ENCODE measurements at regions of chr17 and their contacts with region 1.

Region 1: GRCh38 chr17:63984651-63985386 is 12.1 kb upstream of the SCN4A start:
- DNase-seq: peak; percentile 88 to 96 (median 94)
- H3K4me3 ChIP-seq: peak overlapping the region in 1 of 7 experiments; percentile 30
- H3K27ac ChIP-seq: peak overlapping the region in 1 of 2 experiments; percentile 71
- H3K4me1 ChIP-seq: peaks cover 7 to 71% (median 54%) of the 10 kb centered on the region in 4 experiments
- H3K27me3 ChIP-seq: no peaks in the 10 kb centered on the region

Region 2: GRCh38 chr17:63911657-63912426 is 73.0 kb before region 1 on chr17:
- CTCF ChIA-PET with region 1: interaction called, 56 read pairs
- POLR2A ChIA-PET with region 1: no interaction called
- DNase-seq: peak in 2 of 3 donors; percentile 48 to 61
- H3K4me3 ChIP-seq: no peak overlapping the region
- H3K27ac ChIP-seq: no peak overlapping the region
- H3K4me1 ChIP-seq: no peaks in the 10 kb centered on the region
- H3K27me3 ChIP-seq: no peaks in the 10 kb centered on the region

Region 3: DNA sequence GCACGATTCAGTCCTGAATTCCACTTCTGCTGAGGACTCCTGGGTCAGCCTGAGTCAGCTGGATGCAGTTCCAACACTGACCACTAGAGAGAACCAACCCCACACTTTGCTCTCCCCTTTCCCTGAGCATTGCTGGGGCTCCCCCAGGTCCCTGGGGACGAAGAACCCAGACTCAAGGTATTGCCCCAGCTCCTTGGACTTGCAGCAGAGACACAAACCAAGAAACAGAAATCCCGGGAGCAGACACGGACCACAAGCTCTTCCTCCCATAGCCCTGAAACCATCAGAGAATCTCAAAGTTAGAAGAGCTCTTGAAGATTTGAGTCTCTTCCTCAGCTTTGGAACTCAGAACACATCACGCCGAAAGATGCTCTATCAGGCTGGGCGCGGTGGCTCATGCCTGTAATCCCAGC is 65.5 kb before region 1 on chr17:
- CTCF ChIA-PET with region 1: interaction called, 56 read pairs
- POLR2A ChIA-PET with region 1: no interaction called
- DNase-seq: peak; percentile 66 to 83 (median 71)
- H3K4me3 ChIP-seq: no peak overlapping the region
- H3K27ac ChIP-seq: no peak overlapping the region
- H3K4me1 ChIP-seq: peaks cover 0 to 5% (median 0%) of the 10 kb centered on the region in 4 experiments
- H3K27me3 ChIP-seq: no peaks in the 10 kb centered on the region

Region 4: GRCh38 chr17:63931099-63931561 is 53.7 kb before region 1 on chr17:
- CTCF ChIA-PET with region 1: interaction called, 12 read pairs
- POLR2A ChIA-PET with region 1: no interaction called
- DNase-seq: peak; percentile 60 to 74 (median 72)
- H3K4me3 ChIP-seq: peak overlapping the region in 6 of 7 experiments; percentile 52 to 85 (median 68)
- H3K27ac ChIP-seq: peak overlapping the region in 1 of 2 experiments; percentile 34
- H3K4me1 ChIP-seq: peaks cover 0 to 29% (median 27%) of the 10 kb centered on the region in 4 experiments
- H3K27me3 ChIP-seq: no peaks in the 10 kb centered on the region

Region 5: DNA sequence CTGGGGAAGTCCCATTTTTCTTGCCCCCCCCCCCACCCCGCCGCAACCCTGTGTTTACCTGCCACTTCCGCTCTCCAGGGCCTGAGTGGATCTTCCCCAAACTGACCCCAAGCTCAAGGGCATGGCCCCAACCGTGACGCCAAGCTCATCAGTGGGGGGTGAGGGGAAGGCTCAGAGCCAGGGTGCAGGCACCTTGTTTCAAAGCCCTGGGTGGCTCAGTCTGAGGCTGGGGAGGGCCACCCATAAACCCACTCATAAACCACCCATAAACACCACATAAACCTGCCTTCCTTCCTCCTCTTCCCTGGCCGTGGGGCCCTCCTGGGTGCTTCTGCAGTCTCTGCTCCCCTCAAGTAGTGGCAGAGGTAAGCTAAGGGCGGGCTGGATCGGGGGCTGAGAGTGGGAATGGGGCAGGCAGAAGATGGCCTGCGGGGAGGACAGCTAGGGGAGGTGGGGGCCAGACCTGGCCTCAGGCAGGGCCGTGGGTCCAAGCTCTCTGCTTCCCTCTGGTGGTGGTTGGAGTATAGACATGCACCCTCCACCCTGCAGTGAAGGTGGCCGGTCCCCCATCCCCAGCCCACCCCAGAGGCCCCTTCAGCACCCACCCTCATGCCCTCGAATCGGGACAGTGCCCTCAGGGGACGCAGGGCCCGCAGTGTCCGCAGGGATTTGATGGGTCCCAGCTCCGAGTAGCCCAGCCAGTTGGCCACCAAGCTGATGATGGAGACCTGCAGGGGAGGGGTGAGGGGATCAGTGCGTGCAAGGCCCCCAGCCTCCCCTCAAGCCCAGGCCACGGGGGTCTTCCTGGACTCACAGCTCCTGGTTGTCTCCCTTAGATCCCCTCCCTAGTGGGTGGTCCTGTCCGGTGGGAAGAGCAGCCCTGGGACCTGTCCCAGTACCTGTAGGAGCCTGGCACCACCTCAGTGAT is 38.1 kb before region 1 on chr17:
- CTCF ChIA-PET with region 1: interaction called, 24 read pairs
- POLR2A ChIA-PET with region 1: no interaction called
- DNase-seq: peak; percentile 44 to 68 (median 63)
- H3K4me3 ChIP-seq: peak overlapping the region in 2 of 7 experiments; percentile 6 to 53
- H3K27ac ChIP-seq: no peak overlapping the region
- H3K4me1 ChIP-seq: peaks cover 0 to 37% (median 23%) of the 10 kb centered on the region in 4 experiments
- H3K27me3 ChIP-seq: no peaks in the 10 kb centered on the region

Region 6: GRCh38 chr17:63974594-63975192 is 10.1 kb before region 1 on chr17:
- CTCF ChIA-PET with region 1: interaction called, 16 read pairs
- POLR2A ChIA-PET with region 1: interaction called, 3 read pairs
- DNase-seq: peak in 1 of 3 donors; percentile 7
- H3K4me3 ChIP-seq: no peak overlapping the region
- H3K27ac ChIP-seq: no peak overlapping the region
- H3K4me1 ChIP-seq: peaks cover 0 to 36% (median 21%) of the 10 kb centered on the region in 4 experiments
- H3K27me3 ChIP-seq: no peaks in the 10 kb centered on the region

Region 7: DNA sequence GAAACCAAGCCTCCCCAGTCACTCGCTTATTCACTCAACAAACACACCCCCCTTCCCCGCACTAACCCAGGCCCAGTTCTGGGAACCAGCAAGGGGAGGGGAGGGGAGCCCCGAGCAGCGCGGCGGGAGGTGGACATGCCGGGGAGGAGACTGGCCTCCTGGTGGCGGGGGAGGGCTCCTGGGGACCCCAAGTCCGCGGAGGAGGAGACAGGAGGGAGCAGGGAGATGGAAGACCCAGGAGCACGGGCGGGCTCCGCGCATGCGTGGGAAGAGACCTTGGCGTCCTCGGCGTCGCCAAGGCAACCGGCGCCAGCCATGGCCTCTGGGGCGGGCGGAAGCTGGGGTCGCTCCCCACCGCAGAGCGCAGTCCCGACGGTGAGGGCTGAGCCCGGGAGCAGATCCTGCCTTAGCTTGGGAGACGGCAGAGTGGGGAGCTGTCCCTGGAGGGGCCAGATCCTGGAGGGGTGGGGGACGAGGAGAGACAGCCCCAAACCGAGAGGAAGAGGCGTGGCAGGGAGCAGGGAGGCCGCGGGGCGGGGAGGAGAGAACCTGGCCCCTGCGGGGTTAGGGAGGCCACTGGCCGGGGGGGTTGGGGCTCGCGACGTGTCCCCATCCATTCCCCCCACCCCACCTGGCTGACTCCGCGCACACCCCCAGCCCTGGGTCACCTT is 13.4 kb after region 1 on chr17 and contains the start of gene PRR29:
- CTCF ChIA-PET with region 1: interaction called, 14 read pairs
- POLR2A ChIA-PET with region 1: no interaction called
- DNase-seq: peak; percentile 65 to 73 (median 71)
- H3K4me3 ChIP-seq: peak within 1 kb of the TSS; percentile 54 to 90 (median 80)
- H3K27ac ChIP-seq: no peak within 1 kb of the TSS
- H3K4me1 ChIP-seq: peaks cover 0 to 35% (median 21%) of the 10 kb centered on the region in 4 experiments
- H3K27me3 ChIP-seq: no peaks in the 10 kb centered on the region

Region 8: GRCh38 chr17:64008346-64008745 is 23.5 kb after region 1 on chr17:
- CTCF ChIA-PET with region 1: no interaction called
- POLR2A ChIA-PET with region 1: no interaction called
- DNase-seq: no peak
- H3K4me3 ChIP-seq: no peak overlapping the region
- H3K27ac ChIP-seq: peak overlapping the region; percentile 25 to 55
- H3K4me1 ChIP-seq: peaks cover 0 to 51% (median 45%) of the 10 kb centered on the region in 4 experiments
- H3K27me3 ChIP-seq: no peaks in the 10 kb centered on the region

Region 9: GRCh38 chr17:64063766-64064224 is 79.0 kb after region 1 on chr17:
- CTCF ChIA-PET with region 1: no interaction called
- POLR2A ChIA-PET with region 1: no interaction called
- DNase-seq: peak; percentile 70 to 84 (median 82)
- H3K4me3 ChIP-seq: peak overlapping the region in 2 of 7 experiments; percentile 15 to 43
- H3K27ac ChIP-seq: no peak overlapping the region
- H3K4me1 ChIP-seq: peaks cover 0 to 24% (median 12%) of the 10 kb centered on the region in 4 experiments
- H3K27me3 ChIP-seq: no peaks in the 10 kb centered on the region

Measured in common myeloid progenitor, CD34-positive (primary cell).